ENCODE measurements at regions of chr1 and their contacts with region 1.

Region 1: GRCh38 chr1:26780344-26780957 is 7.3 kb upstream of the PIGV start:
- DNase-seq: no peak
- ATAC-seq: no peak

Region 2: DNA sequence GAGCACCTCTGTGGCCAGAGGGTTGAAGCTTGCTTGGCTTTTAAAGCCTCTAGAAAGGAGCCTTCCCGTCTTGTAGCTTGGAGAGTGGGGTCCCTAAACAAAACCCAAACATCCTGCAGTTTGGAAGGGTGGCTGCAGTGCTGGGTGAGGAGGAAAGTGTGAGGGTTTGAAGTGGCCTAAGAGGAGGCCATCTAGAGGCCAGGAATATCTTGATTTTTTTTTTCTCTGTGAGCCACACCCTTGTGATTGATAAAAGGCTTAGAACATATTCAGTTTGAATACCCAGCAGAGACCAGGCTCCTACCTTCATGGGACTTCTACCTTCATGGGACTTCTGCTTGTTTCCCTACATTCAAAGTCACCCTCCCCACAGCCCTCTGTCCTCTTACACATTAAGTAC is 30.0 kb before region 1 on chr1:
- intact Hi-C with region 1: loop called (anchors 2 kb)
- DNase-seq: no peak
- ATAC-seq: no peak